HAP-1 (cell line): ENCODE measurements at regions of chr1 and their contacts with region 1.

Region 1: GRCh38 chr1:24694380-24694843 is 50.8 kb upstream of the CLIC4 start:
- DNase-seq: no peak
- H3K4me3 ChIP-seq: no peak overlapping the region
- H3K4me1 ChIP-seq: no peaks in the 10 kb centered on the region
- H3K27me3 ChIP-seq: no peaks in the 10 kb centered on the region

Region 2: DNA sequence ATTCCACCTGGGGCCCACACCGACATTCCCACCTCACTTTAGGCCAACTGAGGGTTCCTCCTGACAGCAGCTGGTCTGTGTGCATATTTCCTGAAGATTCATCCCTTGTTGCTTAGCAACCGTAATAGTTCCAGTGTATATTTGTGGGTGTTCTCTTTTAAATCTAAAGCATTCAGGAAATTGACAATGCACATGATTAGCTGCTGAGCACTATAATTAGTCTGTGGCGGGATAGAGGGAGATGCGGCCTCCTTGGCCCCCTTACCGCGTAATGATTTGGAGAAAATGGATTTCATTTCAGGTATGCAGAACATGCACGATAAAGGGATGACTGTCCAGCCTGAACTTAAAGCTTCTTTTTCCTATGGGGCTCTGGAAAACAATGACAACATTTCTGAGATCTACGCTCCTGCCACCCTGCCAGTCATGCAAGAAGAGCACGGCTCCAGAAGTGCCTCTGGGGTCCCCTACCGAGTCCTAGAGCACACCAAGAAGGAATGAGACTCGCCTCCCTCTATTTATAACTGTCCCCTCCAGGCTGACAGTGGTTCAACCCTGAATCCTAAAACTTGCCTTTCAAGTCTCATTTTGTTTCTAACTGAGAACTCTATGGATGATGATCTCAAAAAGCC is 225.6 kb before region 1 on chr1:
- in situ Hi-C with region 1: no loop called
- DNase-seq: peak in 1 of 2 experiments; percentile 7
- H3K4me3 ChIP-seq: no peak overlapping the region
- H3K4me1 ChIP-seq: peaks cover 3% of the 10 kb centered on the region
- H3K27me3 ChIP-seq: no peaks in the 10 kb centered on the region

Region 3: GRCh38 chr1:24536391-24536840 is 158.0 kb before region 1 on chr1:
- in situ Hi-C with region 1: no loop called
- DNase-seq: peak; percentile 30 to 58
- H3K4me3 ChIP-seq: no peak overlapping the region
- H3K4me1 ChIP-seq: peaks cover 46% of the 10 kb centered on the region
- H3K27me3 ChIP-seq: no peaks in the 10 kb centered on the region

Region 4: GRCh38 chr1:24830680-24831272 is 136.4 kb after region 1 on chr1:
- in situ Hi-C with region 1: loop called (anchors 5 kb)
- DNase-seq: peak in 1 of 2 experiments; percentile 72
- H3K4me3 ChIP-seq: no peak overlapping the region
- H3K4me1 ChIP-seq: peaks cover 3% of the 10 kb centered on the region; the same call in 1 of the 2 replicates
- H3K27me3 ChIP-seq: no peaks in the 10 kb centered on the region

Region 5: GRCh38 chr1:24926563-24927249 is 232.3 kb after region 1 on chr1:
- in situ Hi-C with region 1: no loop called
- DNase-seq: peak in 1 of 2 experiments; percentile 29
- H3K4me3 ChIP-seq: no peak overlapping the region
- H3K4me1 ChIP-seq: peaks cover 12% of the 10 kb centered on the region
- H3K27me3 ChIP-seq: no peaks in the 10 kb centered on the region